Activated naive CD4-positive, alpha-beta T cell treated with anti-CD3 and anti-CD28 coated beads for 36 hours (primary cell): ENCODE measurements at regions of chr22 and their contacts with region 1.

Region 1: DNA sequence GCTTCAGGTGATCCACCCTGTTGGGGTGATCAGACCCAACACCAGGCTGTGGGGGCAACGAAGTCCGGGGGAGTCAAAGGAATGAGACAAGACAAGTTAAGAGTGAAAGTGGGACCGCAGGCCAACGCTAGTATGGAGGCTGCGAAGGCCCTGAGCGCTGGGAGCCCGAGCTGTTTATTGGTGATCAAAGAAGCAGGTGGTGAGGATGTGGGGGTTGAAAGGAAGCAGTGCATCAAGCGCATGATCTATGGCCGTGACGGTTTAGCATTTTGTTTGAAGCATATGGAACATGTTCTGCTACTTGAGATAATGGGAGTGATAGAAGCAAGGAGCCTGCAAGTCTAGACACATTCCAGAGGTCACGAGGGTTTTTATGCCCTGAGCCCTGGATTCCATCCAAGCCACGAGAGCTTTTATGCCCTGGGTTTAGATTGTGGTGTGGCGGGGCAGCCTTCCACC is 49.5 kb downstream of the MCHR1 start:
- DNase-seq: peak; percentile 80
- H3K4me3 Mint-ChIP-seq: peak overlapping the region; percentile 63
- H3K27ac Mint-ChIP-seq: peak overlapping the region; percentile 82
- H3K4me1 Mint-ChIP-seq: peaks cover 45% of the 10 kb centered on the region
- H3K27me3 Mint-ChIP-seq: no peaks in the 10 kb centered on the region

Region 2: DNA sequence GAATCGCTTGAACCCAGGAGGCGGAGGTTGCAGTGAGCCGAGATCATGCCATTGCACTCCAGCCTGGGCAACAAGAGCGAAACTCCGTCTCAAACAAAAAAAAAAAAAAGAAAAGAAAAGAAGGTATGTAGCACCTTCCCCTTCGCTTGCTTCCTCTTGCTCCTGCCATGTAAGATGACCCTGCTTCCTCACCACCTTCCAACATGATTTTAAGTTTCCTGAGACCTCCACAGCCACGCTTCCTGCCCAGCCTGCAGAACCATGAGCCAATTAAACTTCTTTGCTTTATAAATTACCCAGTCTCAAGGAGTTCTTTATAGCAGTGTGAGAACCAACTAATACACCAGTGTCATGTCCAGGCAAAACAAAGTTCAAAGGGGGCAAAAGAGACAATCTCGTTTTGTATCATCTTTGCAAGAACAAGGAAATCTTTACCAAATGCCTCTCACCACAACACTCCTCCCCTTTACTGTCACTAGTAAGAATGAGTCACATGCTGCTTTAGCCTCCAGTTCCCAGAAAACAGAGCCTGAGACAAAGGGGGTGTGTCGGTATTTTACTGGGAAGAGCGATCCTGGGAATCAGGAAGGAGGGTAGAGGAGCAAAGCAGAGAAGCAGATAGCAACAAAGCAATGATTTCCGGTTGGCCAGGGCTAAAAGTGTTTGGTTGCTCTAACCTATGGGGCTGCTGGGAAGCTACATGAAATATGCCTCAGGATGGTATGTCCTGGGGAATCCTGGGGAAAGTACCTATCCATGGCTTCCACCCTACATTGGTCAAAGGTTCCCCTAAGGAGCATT is 59.9 kb before region 1 on chr22:
- CTCF ChIA-PET with region 1: no interaction called
- intact Hi-C with region 1: loop called (anchors 5 kb)
- DNase-seq: peak; percentile 50
- H3K4me3 Mint-ChIP-seq: peak overlapping the region; percentile 33
- H3K27ac Mint-ChIP-seq: peak overlapping the region; percentile 88
- H3K4me1 Mint-ChIP-seq: peaks cover 22% of the 10 kb centered on the region
- H3K27me3 Mint-ChIP-seq: no peaks in the 10 kb centered on the region

Region 3: GRCh38 chr22:40714192-40714951 is 14.4 kb before region 1 on chr22:
- CTCF ChIA-PET with region 1: interaction called, 4 read pairs
- intact Hi-C with region 1: loop called (anchors 1 kb)
- DNase-seq: no peak
- H3K4me3 Mint-ChIP-seq: no peak overlapping the region
- H3K27ac Mint-ChIP-seq: no peak overlapping the region
- H3K4me1 Mint-ChIP-seq: peaks cover 29% of the 10 kb centered on the region
- H3K27me3 Mint-ChIP-seq: no peaks in the 10 kb centered on the region

Region 4: GRCh38 chr22:40739721-40740120 is 11.0 kb after region 1 on chr22:
- CTCF ChIA-PET with region 1: interaction called, 10 read pairs
- intact Hi-C with region 1: no loop called
- DNase-seq: no peak
- H3K4me3 Mint-ChIP-seq: no peak overlapping the region
- H3K27ac Mint-ChIP-seq: no peak overlapping the region
- H3K4me1 Mint-ChIP-seq: no peaks in the 10 kb centered on the region
- H3K27me3 Mint-ChIP-seq: no peaks in the 10 kb centered on the region

Region 5: DNA sequence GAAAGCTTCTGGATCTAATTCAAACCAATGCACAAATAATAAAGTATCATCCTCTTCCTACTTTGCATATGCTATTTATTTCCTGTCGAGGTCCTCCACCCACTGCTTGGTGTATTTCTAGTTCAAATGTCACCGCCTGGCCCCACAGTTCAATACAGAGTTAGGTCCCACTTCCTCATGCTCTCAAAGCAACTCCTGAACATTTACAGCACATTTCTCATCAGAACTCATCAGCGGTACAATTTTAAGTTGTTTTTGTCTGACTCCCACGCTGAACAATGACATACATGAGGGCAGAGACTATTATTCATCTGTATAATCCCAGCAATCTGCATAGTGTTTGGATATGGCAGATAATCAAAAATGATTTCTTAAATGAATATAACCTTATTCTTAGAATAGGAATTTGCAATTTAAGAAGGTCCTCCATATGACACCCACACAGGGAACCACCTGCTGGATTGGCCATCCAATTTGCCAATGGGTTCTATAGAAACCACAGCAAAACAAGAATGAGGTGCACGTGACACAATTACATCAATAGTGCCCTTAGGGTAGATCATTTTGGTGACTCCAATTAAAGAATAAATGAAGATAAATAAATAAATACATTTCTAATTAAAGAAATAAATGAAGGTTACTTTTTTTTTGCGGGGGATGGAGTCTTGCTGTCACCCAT is 36.1 kb after region 1 on chr22:
- CTCF ChIA-PET with region 1: interaction called, 5 read pairs
- intact Hi-C with region 1: loop called (anchors 5 kb)
- DNase-seq: peak; percentile 48
- H3K4me3 Mint-ChIP-seq: no peak overlapping the region
- H3K27ac Mint-ChIP-seq: peak overlapping the region; percentile 82
- H3K4me1 Mint-ChIP-seq: peaks cover 22% of the 10 kb centered on the region
- H3K27me3 Mint-ChIP-seq: no peaks in the 10 kb centered on the region

Region 6: GRCh38 chr22:40818747-40819598 is 90.2 kb after region 1 on chr22 and contains the start of gene SLC25A17:
- CTCF ChIA-PET with region 1: interaction called, 5 read pairs
- intact Hi-C with region 1: loop called (anchors 5 kb)
- DNase-seq: peak; percentile 89
- H3K4me3 Mint-ChIP-seq: peak within 1 kb of the TSS; percentile 94
- H3K27ac Mint-ChIP-seq: peak within 1 kb of the TSS; percentile 83
- H3K4me1 Mint-ChIP-seq: peaks cover 34% of the 10 kb centered on the region
- H3K27me3 Mint-ChIP-seq: no peaks in the 10 kb centered on the region
- total RNA-seq, gene SLC25A17: 23.0 to 24.6 TPM